Naive thymus-derived CD4-positive, alpha-beta T cell (primary cell): ENCODE measurements at regions of chr1 and their contacts with region 1.

Region 1: GRCh38 chr1:84781946-84782771 is 91.9 kb upstream of the SSX2IP start:
- DNase-seq: peak; percentile 63 to 82 (median 75)
- ATAC-seq: peak; percentile 93
- H3K4me3 ChIP-seq: peak overlapping the region; percentile 23
- H3K4me3 Mint-ChIP-seq: peak overlapping the region; percentile 60 to 89 (median 84)
- H3K27ac ChIP-seq: peak overlapping the region; percentile 26
- H3K27ac Mint-ChIP-seq: peak overlapping the region in 8 of 9 donors; percentile 48 to 88 (median 78)
- H3K4me1 ChIP-seq: peaks cover 0 to 14% of the 10 kb centered on the region in 2 donors
- H3K4me1 Mint-ChIP-seq: peaks cover 17 to 35% (median 30%) of the 10 kb centered on the region in 7 donors
- H3K27me3 ChIP-seq: no peaks in the 10 kb centered on the region
- H3K27me3 Mint-ChIP-seq: peaks cover 0 to 7% (median 0%) of the 10 kb centered on the region in 5 donors

Region 2: DNA sequence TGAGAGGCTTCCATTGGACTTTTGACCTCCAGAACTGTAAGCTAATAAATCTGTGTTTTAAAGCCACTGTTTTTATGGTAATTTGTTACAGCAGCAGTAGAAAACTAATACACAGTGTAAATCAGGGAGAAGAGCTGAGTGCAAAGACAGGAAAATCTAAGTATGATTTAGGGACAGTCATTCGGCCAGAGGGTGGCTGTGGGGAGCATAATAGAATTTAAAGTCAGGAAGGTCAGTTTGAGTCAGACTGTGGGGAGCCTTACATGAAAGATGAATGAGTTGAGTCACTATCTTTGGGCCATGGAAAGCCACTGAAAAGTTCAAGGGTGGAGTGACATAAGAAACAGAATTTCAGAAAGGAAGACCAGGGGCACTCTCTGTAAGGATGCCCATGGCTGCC is 39.5 kb before region 1 on chr1:
- CTCF ChIA-PET with region 1: no interaction called
- POLR2A ChIA-PET with region 1: no interaction called
- intact Hi-C with region 1: no loop called
- DNase-seq: no peak
- ATAC-seq: no peak
- H3K4me3 ChIP-seq: no peak overlapping the region
- H3K4me3 Mint-ChIP-seq: no peak overlapping the region
- H3K27ac ChIP-seq: no peak overlapping the region
- H3K27ac Mint-ChIP-seq: no peak overlapping the region
- H3K4me1 ChIP-seq: no peaks in the 10 kb centered on the region
- H3K4me1 Mint-ChIP-seq: no peaks in the 10 kb centered on the region
- H3K27me3 ChIP-seq: no peaks in the 10 kb centered on the region
- H3K27me3 Mint-ChIP-seq: peaks cover 0 to 7% (median 0%) of the 10 kb centered on the region in 5 donors

Region 3: GRCh38 chr1:84853741-84854721 is 71.9 kb after region 1 on chr1:
- CTCF ChIA-PET with region 1: no interaction called
- POLR2A ChIA-PET with region 1: no interaction called
- intact Hi-C with region 1: loop called in 1 of 2 experiments (anchors 1 kb)
- DNase-seq: peak in 8 of 9 donors; percentile 16 to 56 (median 41)
- ATAC-seq: peak; percentile 96
- H3K4me3 ChIP-seq: no peak overlapping the region
- H3K4me3 Mint-ChIP-seq: peak overlapping the region in 6 of 10 donors; percentile 0 to 70 (median 14)
- H3K27ac ChIP-seq: peak overlapping the region; percentile 5
- H3K27ac Mint-ChIP-seq: peak overlapping the region; percentile 54 to 98 (median 87)
- H3K4me1 ChIP-seq: peaks cover 14 to 17% of the 10 kb centered on the region in 2 donors
- H3K4me1 Mint-ChIP-seq: peaks cover 23 to 52% (median 45%) of the 10 kb centered on the region in 7 donors
- H3K27me3 ChIP-seq: no peaks in the 10 kb centered on the region
- H3K27me3 Mint-ChIP-seq: peaks cover 0 to 8% (median 0%) of the 10 kb centered on the region in 5 donors